ENCODE measurements at regions of chr1 and their contacts with region 1.

Region 1: DNA sequence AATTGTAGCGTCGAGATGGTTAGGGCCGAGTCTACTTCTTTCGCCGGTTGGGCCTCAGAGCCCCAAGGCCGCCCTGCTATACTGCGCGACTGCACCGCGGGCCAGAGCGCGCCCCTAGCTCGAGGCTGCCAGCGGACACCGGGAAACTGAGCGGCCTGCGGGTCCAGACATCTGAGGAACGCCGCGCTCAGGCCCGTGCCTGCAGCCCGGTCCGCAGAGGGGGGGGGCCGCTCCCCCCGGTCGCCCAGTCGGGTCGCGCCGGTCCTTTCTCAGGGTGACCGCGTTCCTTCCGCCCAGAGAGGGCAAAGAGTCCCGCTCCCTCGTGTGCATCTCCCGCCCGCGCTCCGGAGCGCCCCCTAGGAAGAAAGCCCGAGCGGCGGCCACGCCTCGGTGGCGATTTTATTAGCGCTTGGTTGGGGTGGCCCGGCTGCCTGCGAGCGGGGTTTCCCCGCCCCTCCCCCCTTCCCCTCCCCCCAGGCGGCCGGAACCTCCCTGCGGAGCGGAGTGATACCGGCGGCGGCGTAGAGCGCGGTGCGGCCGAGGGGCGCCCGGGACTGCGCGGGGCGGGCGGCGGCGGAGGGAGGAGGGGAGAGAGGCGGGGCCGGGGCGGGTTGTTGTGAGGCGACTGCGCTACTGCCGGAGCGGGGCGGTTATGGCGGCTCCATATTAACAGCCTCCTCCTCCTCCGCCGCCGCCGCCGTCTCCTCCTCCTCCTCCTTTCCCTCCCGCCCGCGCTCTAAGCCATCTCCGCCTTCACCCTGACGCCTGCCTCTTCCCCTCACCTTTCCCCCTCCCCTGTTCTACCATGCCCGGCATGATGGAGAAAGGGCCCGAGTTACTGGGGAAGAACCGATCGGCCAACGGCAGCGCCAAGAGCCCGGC is at the start of gene RCOR3:
- DNase-seq: peak; percentile 86
- ATAC-seq: peak; percentile 75
- H3K4me3 Mint-ChIP-seq: peak within 1 kb of the TSS; percentile 93
- H3K27ac Mint-ChIP-seq: peak within 1 kb of the TSS; percentile 97
- H3K4me1 Mint-ChIP-seq: peaks cover 20% of the 10 kb centered on the region
- H3K27me3 Mint-ChIP-seq: no peaks in the 10 kb centered on the region
- CTCF ChIP-seq: peak; percentile 59
- total RNA-seq, gene RCOR3: 59.3 and 72.3 TPM in 2 replicates

Region 2: GRCh38 chr1:209784265-209785169 is 1474.5 kb before region 1 on chr1 and contains the start of gene C1orf74:
- CTCF ChIA-PET with region 1: no interaction called
- POLR2A ChIA-PET with region 1: no interaction called
- intact Hi-C with region 1: loop called (anchors 10 kb)
- DNase-seq: peak; percentile 99
- ATAC-seq: peak; percentile 98
- H3K4me3 Mint-ChIP-seq: peak within 1 kb of the TSS; percentile 99
- H3K27ac Mint-ChIP-seq: peak within 1 kb of the TSS; percentile 98
- H3K4me1 Mint-ChIP-seq: peaks cover 20% of the 10 kb centered on the region
- H3K27me3 Mint-ChIP-seq: peaks cover 10% of the 10 kb centered on the region
- CTCF ChIP-seq: no peak
- total RNA-seq, gene C1orf74: 3.7 TPM in 2 replicates

Region 3: GRCh38 chr1:210342986-210343780 is 915.8 kb before region 1 on chr1:
- CTCF ChIA-PET with region 1: no interaction called
- POLR2A ChIA-PET with region 1: no interaction called
- intact Hi-C with region 1: loop called (anchors 5 kb)
- DNase-seq: peak; percentile 62
- ATAC-seq: peak; percentile 90
- H3K4me3 Mint-ChIP-seq: no peak overlapping the region
- H3K27ac Mint-ChIP-seq: no peak overlapping the region
- H3K4me1 Mint-ChIP-seq: peaks cover 34% of the 10 kb centered on the region
- H3K27me3 Mint-ChIP-seq: no peaks in the 10 kb centered on the region
- CTCF ChIP-seq: no peak

Region 4: GRCh38 chr1:211323156-211324063 is 64.4 kb after region 1 on chr1:
- CTCF ChIA-PET with region 1: no interaction called
- POLR2A ChIA-PET with region 1: interaction called, 11 read pairs
- intact Hi-C with region 1: loop called (anchors 1 kb)
- DNase-seq: no peak
- ATAC-seq: peak; percentile 62
- H3K4me3 Mint-ChIP-seq: no peak overlapping the region
- H3K27ac Mint-ChIP-seq: no peak overlapping the region
- H3K4me1 Mint-ChIP-seq: peaks cover 41% of the 10 kb centered on the region
- H3K27me3 Mint-ChIP-seq: no peaks in the 10 kb centered on the region
- CTCF ChIP-seq: peak; percentile 19

Region 5: DNA sequence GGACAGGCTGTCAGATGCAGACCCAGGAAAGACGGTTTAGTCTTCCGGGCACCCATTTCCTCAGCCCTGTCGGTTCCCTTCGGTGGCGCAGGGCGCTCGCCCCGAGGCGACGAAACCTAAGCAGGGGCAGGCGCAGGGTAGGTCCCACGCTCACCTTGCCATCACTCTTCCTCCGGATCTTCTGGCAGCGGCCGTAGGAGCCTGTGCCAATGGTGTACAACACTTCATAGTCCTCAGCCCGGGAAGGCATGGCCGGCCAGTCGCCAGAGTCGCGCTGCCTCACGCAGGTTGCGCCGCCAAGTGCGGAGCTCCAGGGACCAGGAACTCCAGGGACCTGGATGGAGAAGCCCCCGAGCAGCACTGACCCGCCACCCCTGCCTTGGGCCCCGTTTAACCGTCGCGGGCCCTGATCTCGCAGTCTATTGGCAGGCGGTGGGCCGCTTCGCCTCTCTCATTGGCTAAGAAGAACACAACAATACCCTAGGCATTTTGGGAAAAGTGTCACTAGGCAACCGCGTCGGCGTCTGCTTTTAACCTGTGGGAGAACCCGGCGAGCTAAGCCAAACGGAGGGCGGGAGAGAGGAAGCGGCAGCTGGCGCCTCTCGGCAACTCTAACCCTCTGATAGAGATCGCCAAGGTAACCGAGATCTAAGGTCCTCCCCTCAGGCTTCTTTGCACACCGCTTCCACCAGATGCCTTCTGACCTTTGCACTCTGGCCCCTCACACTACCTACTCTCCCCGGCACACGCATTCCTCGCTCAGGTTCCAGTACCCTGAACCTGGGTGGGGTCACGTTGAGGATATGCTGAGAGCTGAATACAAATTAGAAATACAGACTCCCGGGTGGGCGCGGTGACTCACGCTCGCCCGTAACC is 416.5 kb after region 1 on chr1 and contains the start of gene NEK2:
- CTCF ChIA-PET with region 1: no interaction called
- POLR2A ChIA-PET with region 1: interaction called, 4 read pairs
- intact Hi-C with region 1: loop called (anchors 1 kb)
- DNase-seq: peak; percentile 64
- ATAC-seq: peak; percentile 93
- H3K4me3 Mint-ChIP-seq: peak within 1 kb of the TSS; percentile 88
- H3K27ac Mint-ChIP-seq: peak within 1 kb of the TSS; percentile 69
- H3K4me1 Mint-ChIP-seq: peaks cover 39% of the 10 kb centered on the region
- H3K27me3 Mint-ChIP-seq: no peaks in the 10 kb centered on the region
- CTCF ChIP-seq: no peak
- total RNA-seq, gene NEK2: 0.35 and 0.59 TPM in 2 replicates

Measured in activated B cell treated with CpG ODN at 0.5 μM for 24 hours (primary cell).